ENCODE measurements at regions of chr7 and their contacts with region 1.

Region 1: GRCh38 chr7:100081535-100082102 is at the start of gene ZNF3:
- DNase-seq: peak; percentile 95 to 99
- H3K4me3 ChIP-seq: peak within 1 kb of the TSS; percentile 93
- H3K27ac ChIP-seq: peak within 1 kb of the TSS; percentile 79
- H3K4me1 ChIP-seq: peaks cover 16% of the 10 kb centered on the region
- H3K27me3 ChIP-seq: no peaks in the 10 kb centered on the region
- CTCF ChIP-seq: peak; percentile 92
- total RNA-seq, gene ZNF3: 35.2 and 39.0 TPM in 2 replicates

Region 2: DNA sequence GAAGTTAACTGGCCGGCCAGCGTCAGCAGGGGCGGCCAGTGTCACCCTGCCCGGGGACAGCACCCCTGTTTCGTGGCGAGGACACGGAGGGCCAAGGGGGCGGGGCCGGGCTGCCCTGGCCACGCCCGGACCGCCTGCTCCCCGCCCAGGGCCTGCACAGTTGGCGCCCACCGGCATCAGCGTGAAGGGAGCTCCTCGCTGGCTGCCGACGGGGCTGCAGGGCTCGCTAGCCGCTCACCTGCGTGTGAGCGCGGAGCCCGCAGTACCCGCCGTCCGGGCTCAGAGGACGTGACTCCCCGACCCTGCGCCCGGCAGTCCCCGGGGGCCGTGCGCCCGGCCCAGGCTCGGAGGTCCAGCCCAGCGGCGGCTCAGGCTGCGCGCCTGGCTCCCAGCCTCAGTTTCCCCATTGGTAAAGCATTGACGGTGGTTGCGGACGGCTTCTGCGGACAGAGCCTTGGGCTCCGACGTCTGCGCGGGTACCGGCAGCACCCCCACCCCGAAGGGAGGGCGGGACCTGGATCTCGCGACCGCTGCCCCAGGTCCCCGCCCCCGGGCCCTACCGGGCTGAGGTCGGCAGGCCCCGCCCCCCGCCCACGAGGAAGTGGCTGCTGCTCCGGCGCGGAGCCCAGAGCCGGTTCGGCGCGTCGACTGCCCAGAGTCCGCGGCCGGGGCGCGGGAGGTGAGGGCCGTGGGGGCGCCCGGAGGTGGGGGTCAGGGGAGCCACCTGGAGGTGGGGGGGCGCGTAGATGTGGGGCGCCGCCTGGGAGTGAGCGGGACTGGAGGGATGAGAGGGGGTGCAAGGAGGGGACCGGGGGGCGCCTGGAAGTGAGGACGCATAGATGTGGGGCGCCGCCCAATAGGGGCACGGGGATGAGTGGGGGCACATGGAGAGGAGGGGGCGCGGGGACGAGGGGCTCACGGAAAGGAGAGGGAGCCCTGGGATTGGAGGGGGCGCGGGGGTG is 707.2 kb before region 1 on chr7 and contains the start of gene ARPC1B:
- CTCF ChIA-PET with region 1: no interaction called
- POLR2A ChIA-PET with region 1: no interaction called
- intact Hi-C with region 1: loop called (anchors 5 kb)
- DNase-seq: peak; percentile 57 to 82
- H3K4me3 ChIP-seq: peak within 1 kb of the TSS; percentile 63
- H3K27ac ChIP-seq: no peak within 1 kb of the TSS
- H3K4me1 ChIP-seq: peaks cover 21% of the 10 kb centered on the region
- H3K27me3 ChIP-seq: no peaks in the 10 kb centered on the region
- CTCF ChIP-seq: no peak
- total RNA-seq, gene ARPC1B: 276 and 289 TPM in 2 replicates

Region 3: GRCh38 chr7:99918959-99919813 is 162.4 kb before region 1 on chr7 and contains the start of gene TRIM4:
- CTCF ChIA-PET with region 1: no interaction called
- POLR2A ChIA-PET with region 1: no interaction called
- intact Hi-C with region 1: loop called (anchors 2 kb)
- DNase-seq: peak; percentile 79 to 91
- H3K4me3 ChIP-seq: peak within 1 kb of the TSS; percentile 97
- H3K27ac ChIP-seq: peak within 1 kb of the TSS; percentile 65
- H3K4me1 ChIP-seq: peaks cover 16% of the 10 kb centered on the region
- H3K27me3 ChIP-seq: no peaks in the 10 kb centered on the region
- CTCF ChIP-seq: no peak; the same call in 1 of the 2 replicates
- total RNA-seq, gene TRIM4: 34.0 and 35.8 TPM in 2 replicates

Region 4: DNA sequence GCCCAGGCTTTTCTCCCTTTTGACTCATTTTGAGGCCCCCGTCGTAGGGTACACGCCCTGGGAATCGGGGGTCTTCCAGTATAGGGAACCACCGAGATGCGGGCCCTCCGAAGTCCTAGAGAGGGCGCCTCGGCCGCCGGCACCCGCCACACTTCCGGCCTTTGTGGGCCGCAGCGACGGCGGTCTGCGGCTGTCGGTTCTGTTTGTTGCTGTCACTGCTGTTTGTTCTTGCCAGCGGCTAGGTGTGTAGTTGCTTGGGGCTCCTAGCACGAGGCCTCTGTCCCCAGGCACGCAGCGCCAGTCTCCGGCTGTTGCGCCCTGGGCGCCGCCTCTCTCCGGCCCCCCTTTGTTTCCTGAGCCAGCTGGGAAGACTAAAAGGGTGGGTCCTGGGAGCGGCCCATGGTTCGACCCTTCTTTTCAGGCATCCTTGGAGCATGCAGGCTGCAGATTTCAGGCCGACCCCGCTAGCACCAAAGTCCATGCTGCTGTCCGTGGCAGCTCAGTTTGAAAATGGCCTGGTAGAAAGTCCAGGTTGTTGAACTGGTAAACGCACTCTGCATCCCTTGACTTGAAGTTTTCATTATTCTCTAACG is 84.0 kb before region 1 on chr7:
- CTCF ChIA-PET with region 1: interaction called, 7 read pairs
- POLR2A ChIA-PET with region 1: interaction called, 4 read pairs
- intact Hi-C with region 1: loop called (anchors 1 kb)
- DNase-seq: no peak
- H3K4me3 ChIP-seq: no peak overlapping the region
- H3K27ac ChIP-seq: no peak overlapping the region
- H3K4me1 ChIP-seq: 0 out of 2 replicates have a peak, but pooled peaks cover 3% of the 10 kb centered on the region
- H3K27me3 ChIP-seq: peaks cover 44% of the 10 kb centered on the region
- CTCF ChIP-seq: no peak

Region 5: DNA sequence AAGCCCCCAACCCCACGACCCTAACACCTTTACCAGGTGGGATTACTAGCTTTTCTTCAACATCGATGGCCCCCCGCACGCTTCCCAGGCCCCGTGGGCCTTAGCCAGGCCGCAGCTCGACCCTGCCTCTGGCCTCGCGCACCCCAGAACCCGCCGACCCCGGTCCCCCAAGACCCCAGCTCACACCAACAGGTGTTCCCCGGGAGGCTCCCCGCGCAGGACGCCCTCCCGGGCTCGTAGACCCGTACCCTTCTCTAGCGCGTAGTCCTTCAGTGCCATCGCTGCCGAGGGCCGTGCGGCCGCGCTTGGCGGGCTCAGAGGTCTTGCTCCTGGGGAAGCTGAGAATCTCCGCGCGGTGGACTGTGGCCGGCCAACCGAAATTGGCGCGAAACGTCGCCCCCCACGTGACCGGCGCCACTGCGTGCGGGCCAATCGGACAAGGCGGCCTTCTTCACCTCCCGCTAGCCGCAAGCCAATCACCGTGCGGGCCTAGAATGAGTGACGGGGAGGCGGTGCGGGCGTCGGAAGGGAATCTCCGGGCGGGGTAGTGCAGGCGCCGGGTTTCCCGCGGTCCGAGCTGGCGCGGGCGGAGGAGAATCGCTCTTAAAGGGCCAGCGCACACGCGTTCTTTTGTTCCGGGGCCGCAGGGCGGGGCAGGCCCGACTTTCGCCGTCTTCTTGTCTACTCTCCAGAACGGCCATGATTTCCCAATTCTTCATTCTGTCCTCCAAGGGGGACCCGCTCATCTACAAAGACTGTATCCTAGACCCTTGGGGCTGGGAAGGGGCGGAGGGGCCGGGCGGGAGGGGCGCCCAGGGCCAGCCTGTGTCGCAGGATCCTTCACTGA is 19.6 kb after region 1 on chr7 and contains the starts of genes AP4M1 and MCM7:
- CTCF ChIA-PET with region 1: interaction called, 12 read pairs
- POLR2A ChIA-PET with region 1: interaction called, 24 read pairs
- intact Hi-C with region 1: loop called (anchors 1 kb)
- DNase-seq: peak; percentile 96 to 100
- H3K4me3 ChIP-seq: peak within 1 kb of the TSS; percentile 99
- H3K27ac ChIP-seq: peak within 1 kb of the TSS; percentile 85
- H3K4me1 ChIP-seq: peaks cover 19% of the 10 kb centered on the region
- H3K27me3 ChIP-seq: no peaks in the 10 kb centered on the region
- CTCF ChIP-seq: no peak
- total RNA-seq, gene AP4M1: 18.1 and 26.2 TPM in 2 replicates
- total RNA-seq, gene MCM7: 195 and 238 TPM in 2 replicates

Region 6: DNA sequence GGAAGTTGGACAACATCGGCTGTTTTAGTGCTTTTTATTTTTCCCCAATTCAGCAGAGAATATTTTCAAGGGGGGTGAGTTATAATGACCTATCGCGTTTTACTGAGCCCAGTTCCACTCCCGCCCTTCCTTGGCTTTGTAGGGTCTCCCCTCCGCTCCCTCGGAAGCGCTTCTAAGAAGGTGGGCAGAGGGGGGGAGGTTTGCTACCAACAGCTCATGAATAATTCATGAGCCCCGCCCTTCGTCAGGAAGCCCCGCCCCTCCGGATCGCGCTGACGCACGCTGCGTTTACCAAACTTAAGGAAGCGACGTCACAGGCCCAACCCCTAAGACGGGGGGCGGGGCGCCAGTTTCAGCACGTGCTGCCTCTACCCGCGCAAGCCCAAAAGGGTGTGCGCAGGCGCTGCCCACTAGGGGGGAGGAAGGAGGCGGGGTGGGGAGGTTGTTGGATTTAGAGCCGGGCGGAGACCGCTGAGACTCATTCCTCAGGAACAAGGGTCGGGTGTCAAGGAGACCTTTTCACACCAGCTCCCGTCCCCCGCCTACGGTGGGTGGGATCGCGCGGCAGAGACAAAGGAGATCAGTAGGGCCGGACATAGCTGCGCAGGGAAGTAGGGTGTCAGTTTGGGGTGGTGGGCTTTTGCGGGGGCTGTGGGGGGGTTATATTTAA is 347.5 kb after region 1 on chr7:
- CTCF ChIA-PET with region 1: no interaction called
- POLR2A ChIA-PET with region 1: interaction called, 10 read pairs
- intact Hi-C with region 1: loop called (anchors 1 kb)
- DNase-seq: peak; percentile 97 to 100
- H3K4me3 ChIP-seq: peak overlapping the region; percentile 66
- H3K27ac ChIP-seq: peak overlapping the region; percentile 93
- H3K4me1 ChIP-seq: peaks cover 37% of the 10 kb centered on the region
- H3K27me3 ChIP-seq: no peaks in the 10 kb centered on the region
- CTCF ChIP-seq: no peak; the same call in 1 of the 2 replicates